HEK293 (cell line): ENCODE measurements at regions of chr17 and their contacts with region 1.

Region 1: DNA sequence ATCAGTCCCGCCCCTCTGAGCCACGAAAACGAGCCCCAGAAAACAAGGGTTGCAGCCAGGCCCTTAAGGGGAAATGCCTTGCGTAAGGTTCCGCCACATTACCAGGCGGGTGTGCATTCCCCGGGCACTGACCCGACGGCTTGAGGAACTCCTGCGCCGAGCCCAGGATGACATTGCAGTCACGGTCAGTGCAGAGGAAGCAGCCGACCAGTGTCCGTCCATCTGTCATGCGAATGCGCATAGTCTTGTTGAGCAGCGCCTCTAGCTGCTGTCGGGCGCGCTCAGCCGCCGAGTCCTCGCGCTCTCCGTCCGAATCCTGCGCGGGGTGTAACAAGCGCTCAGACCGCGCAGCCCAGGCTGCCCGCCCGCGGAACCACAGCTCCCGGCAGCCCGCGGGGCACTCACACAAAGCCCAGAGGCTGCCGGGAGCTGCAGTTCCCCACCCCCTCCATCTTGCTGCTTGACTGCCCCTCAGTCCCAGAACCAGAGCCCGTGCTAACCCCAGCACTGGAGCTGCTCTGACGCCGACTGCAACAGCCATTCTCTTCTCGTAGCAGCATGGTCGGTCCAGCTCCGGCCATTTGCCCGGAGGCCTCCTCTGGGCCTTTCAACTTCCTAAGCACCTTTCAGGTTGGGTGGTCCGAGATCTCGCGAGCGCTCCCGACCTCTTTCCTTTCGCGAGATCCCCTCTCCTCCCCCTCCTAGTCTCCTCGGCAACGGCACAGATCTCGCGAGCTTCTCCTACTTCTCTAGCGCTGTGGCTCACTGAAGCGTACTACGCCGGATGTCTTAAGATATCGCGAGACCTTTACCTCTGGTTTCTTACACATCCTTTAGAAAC is at the start of gene NAA38:
- H3K4me3 ChIP-seq: peak within 1 kb of the TSS; percentile 88
- H3K27ac ChIP-seq: peak within 1 kb of the TSS; percentile 90
- H3K4me1 ChIP-seq: peaks cover 8% of the 10 kb centered on the region; the same call in 1 of the 2 replicates
- CTCF ChIP-seq: peak; percentile 97

Region 2: GRCh38 chr17:7703584-7704479 is 153.3 kb before region 1 on chr17:
- CTCF ChIA-PET with region 1: no interaction called
- POLR2A ChIA-PET with region 1: no interaction called
- H3K4me3 ChIP-seq: no peak overlapping the region
- H3K27ac ChIP-seq: no peak overlapping the region
- H3K4me1 ChIP-seq: peaks cover 14% of the 10 kb centered on the region; the same call in 1 of the 2 replicates
- CTCF ChIP-seq: no peak

Region 3: DNA sequence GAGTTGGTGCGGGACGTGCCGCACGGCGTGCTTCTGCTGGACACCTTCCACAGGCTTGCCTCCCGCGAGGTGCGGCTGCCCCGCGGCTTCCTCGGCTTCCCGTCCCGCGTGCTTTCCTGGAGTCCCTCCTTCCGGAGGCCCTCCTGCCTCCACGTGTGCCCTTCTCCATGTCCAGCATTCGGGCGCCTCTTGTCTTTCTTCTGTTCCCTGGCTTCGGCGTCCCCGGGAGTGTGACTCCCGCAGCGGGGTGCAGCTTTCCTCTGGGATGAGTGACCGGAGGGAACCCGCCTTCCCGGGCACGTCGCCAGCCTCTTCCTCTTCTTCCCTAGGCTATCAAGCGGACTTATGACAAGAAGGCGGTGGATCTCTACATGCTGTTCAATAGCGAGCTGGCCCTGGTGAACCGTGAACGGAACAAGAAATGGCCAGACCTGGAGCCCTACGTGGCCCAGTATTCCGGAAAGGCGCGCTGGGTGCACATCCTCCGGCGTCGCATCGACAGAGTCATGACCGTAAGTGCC is 116.6 kb before region 1 on chr17:
- CTCF ChIA-PET with region 1: interaction called, 29 read pairs
- POLR2A ChIA-PET with region 1: interaction called, 14 read pairs
- H3K4me3 ChIP-seq: no peak overlapping the region
- H3K27ac ChIP-seq: no peak overlapping the region
- H3K4me1 ChIP-seq: no peaks in the 10 kb centered on the region
- CTCF ChIP-seq: no peak

Region 4: GRCh38 chr17:7825206-7825990 is 31.7 kb before region 1 on chr17:
- CTCF ChIA-PET with region 1: interaction called, 22 read pairs
- POLR2A ChIA-PET with region 1: interaction called, 42 read pairs
- H3K4me3 ChIP-seq: no peak overlapping the region
- H3K27ac ChIP-seq: no peak overlapping the region
- H3K4me1 ChIP-seq: no peaks in the 10 kb centered on the region
- CTCF ChIP-seq: peak; percentile 73; the same call in 1 of the 2 replicates

Region 5: DNA sequence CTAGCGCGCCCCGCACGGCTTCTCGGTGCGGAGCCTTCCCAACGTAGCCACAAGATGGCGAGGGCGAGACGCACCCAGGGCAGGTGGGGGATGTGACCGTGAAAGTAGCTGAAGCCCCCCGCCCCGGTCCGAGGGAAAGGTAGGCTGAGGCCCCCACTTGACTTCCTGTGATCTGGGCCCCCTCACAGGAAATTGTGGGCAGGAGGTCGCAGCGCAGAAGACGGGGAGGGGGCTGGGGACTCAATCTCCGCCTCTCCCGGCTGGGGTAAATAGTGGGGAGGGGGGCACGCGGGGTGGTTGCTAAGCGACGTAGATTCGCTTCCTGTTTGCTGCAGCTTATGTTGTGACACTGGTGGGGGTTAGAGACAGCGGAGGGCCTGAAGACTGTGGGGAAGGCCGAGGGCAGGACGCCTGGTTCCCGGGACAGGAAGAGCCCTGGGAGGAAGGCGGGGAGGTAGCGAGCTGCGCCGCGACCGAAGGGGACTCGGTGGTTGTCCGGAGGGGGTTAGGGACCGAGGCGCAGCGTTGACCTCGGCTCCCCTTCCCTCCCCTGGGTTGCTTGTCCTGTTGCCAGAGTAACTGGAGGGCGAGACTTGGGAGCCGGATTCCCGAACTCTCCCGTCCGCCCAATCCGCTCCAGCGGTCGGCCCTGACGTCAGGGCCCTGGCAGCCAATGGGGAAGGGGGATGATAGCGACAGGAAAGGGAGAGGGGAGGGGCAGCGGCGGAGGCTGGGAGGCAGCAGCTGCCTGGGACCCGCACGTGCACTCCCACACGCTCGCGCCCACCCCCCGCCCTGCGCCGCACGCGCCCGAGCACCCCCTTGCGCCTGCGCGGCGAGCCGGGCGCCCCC is 21.9 kb before region 1 on chr17:
- CTCF ChIA-PET with region 1: interaction called, 7 read pairs
- POLR2A ChIA-PET with region 1: interaction called, 110 read pairs
- H3K4me3 ChIP-seq: peak overlapping the region; percentile 60
- H3K27ac ChIP-seq: peak overlapping the region; percentile 100
- H3K4me1 ChIP-seq: peaks cover 22% of the 10 kb centered on the region
- CTCF ChIP-seq: peak; percentile 97

Region 6: GRCh38 chr17:7844292-7845154 is 12.6 kb before region 1 on chr17:
- CTCF ChIA-PET with region 1: interaction called, 12 read pairs
- POLR2A ChIA-PET with region 1: interaction called, 110 read pairs
- H3K4me3 ChIP-seq: peak overlapping the region; percentile 70
- H3K27ac ChIP-seq: peak overlapping the region; percentile 96
- H3K4me1 ChIP-seq: peaks cover 16% of the 10 kb centered on the region
- CTCF ChIP-seq: 0 out of 2 replicates have a peak, but pooled peaks have one; percentile 49

Region 7: GRCh38 chr17:7867881-7868329 is 10.8 kb after region 1 on chr17:
- CTCF ChIA-PET with region 1: interaction called, 12 read pairs
- POLR2A ChIA-PET with region 1: interaction called, 3 read pairs
- H3K4me3 ChIP-seq: no peak overlapping the region
- H3K27ac ChIP-seq: no peak overlapping the region
- H3K4me1 ChIP-seq: peaks cover under 1% of the 10 kb centered on the region
- CTCF ChIP-seq: no peak